GM12878 (cell line): ENCODE measurements at regions of chr9 and their contacts with region 1.

Region 1: GRCh38 chr9:32384364-32385151 is at the start of gene ACO1:
- DNase-seq: peak; percentile 28
- ATAC-seq: peak; percentile 99
- H3K4me3 ChIP-seq: peak within 1 kb of the TSS; percentile 69
- H3K27ac ChIP-seq: no peak within 1 kb of the TSS
- H3K4me1 ChIP-seq: 0 out of 2 replicates have a peak, but pooled peaks cover 3% of the 10 kb centered on the region
- H3K27me3 ChIP-seq: no peaks in the 10 kb centered on the region; a peak in 2 of 4 replicates
- CTCF ChIP-seq: peak in 1 of 3 experiments; percentile 24; a peak in 1 of 6 replicates
- EP300 ChIP-seq: no peak
- POLR2A ChIP-seq: peak; percentile 82
- RAD21 ChIP-seq: no peak
- polyA plus RNA-seq, gene ACO1: 0.21 to 0.53 TPM

Region 2: DNA sequence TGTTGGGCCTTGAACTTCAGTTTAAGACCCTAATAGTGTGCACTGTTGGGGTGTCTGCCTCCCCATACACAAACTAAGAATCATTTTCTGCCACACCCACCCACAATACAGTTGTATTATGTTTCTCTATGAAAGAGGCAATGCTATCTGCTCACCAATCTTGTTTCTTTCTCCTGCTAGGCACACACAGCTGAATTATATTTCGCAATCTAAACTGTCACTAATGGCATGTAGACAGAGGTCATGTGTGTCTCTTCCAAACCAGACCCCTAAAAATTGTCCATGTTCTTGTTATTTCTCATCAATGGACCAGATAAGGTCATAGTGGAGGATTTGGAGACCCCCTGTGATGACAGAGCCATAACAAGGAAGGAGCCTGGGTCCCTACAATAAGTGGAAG is 84.2 kb after region 1 on chr9:
- CTCF ChIA-PET with region 1: interaction called, 11 read pairs
- POLR2A ChIA-PET with region 1: no interaction called
- RAD21 ChIA-PET with region 1: interaction called, 3 read pairs
- SMC1A ChIA-PET with region 1: no interaction called
- in situ Hi-C with region 1: no loop called
- intact Hi-C with region 1: loop called (anchors 5 kb)
- DNase-seq: no peak
- ATAC-seq: no peak
- H3K4me3 ChIP-seq: no peak overlapping the region
- H3K27ac ChIP-seq: no peak overlapping the region
- H3K4me1 ChIP-seq: no peaks in the 10 kb centered on the region
- H3K27me3 ChIP-seq: no peaks in the 10 kb centered on the region
- CTCF ChIP-seq: no peak
- EP300 ChIP-seq: no peak
- POLR2A ChIP-seq: no peak
- RAD21 ChIP-seq: no peak

Region 3: DNA sequence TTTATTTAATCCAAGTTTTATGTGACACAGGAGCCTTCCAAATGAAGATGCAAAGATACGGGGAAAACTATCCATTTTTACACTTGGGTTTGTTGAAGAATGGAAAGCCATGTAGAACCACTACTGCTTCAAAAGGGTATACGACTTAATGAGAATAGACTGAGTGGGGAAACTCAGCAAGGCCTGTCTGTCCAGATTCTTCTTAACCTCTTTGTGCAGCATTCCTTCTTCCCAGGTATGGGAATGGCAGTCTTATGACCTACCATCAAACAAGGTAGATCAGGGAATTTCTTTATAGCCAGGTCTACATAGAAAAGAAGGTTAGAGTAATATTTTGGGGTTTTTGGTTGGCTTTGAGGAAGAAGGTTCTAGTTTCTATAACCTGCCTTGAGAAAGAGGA is 593.5 kb after region 1 on chr9:
- CTCF ChIA-PET with region 1: interaction called, 7 read pairs
- POLR2A ChIA-PET with region 1: no interaction called
- RAD21 ChIA-PET with region 1: no interaction called
- SMC1A ChIA-PET with region 1: no interaction called
- in situ Hi-C with region 1: loop called (anchors 5 kb)
- intact Hi-C with region 1: no loop called
- DNase-seq: no peak
- ATAC-seq: no peak
- H3K4me3 ChIP-seq: no peak overlapping the region
- H3K27ac ChIP-seq: no peak overlapping the region
- H3K4me1 ChIP-seq: no peaks in the 10 kb centered on the region
- H3K27me3 ChIP-seq: no peaks in the 10 kb centered on the region
- CTCF ChIP-seq: no peak
- EP300 ChIP-seq: no peak
- POLR2A ChIP-seq: no peak
- RAD21 ChIP-seq: no peak

Region 4: DNA sequence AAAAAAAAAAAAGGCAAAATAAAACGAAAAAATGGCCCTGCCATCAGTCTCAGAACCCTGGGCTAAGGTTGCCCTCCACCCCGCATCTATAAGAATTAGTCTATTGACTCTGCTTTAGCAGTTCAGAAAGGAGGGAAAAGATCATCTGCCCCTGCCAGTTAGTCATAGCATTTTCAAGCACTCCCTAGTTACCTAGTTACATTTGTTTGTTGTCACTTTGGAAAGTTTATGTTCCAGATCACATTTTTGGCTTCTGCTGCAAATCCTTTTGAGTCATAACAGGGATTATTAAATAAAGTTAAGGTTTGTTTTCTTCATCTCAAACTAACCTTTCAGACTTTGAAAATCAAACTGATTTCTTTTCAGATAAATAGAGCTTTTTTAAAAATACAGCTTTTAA is 965.8 kb after region 1 on chr9:
- CTCF ChIA-PET with region 1: no interaction called
- POLR2A ChIA-PET with region 1: no interaction called
- RAD21 ChIA-PET with region 1: no interaction called
- SMC1A ChIA-PET with region 1: no interaction called
- in situ Hi-C with region 1: no loop called
- intact Hi-C with region 1: no loop called
- DNase-seq: no peak
- ATAC-seq: no peak
- H3K4me3 ChIP-seq: no peak overlapping the region
- H3K27ac ChIP-seq: no peak overlapping the region
- H3K4me1 ChIP-seq: no peaks in the 10 kb centered on the region
- H3K27me3 ChIP-seq: no peaks in the 10 kb centered on the region
- CTCF ChIP-seq: no peak
- EP300 ChIP-seq: no peak
- POLR2A ChIP-seq: no peak
- RAD21 ChIP-seq: no peak